Prostate gland (tissue), 2 donors: ENCODE measurements at regions of chr5 and their contacts with region 1.

Region 1: GRCh38 chr5:64634997-64635686 is 55.2 kb upstream of the SHISAL2B start:
- DNase-seq: no peak
- H3K4me3 ChIP-seq: no peak overlapping the region
- H3K27ac ChIP-seq: no peak overlapping the region
- H3K4me1 ChIP-seq: no peaks in the 10 kb centered on the region
- H3K27me3 ChIP-seq: no peaks in the 10 kb centered on the region
- CTCF ChIP-seq: peak; percentile 73 to 86 (median 78)
- POLR2A ChIP-seq: no peak

Region 2: GRCh38 chr5:64784451-64785025 is 149.4 kb after region 1 on chr5:
- intact Hi-C with region 1: loop called (anchors 2 kb)
- DNase-seq: peak; percentile 77
- H3K4me3 ChIP-seq: no peak overlapping the region
- H3K27ac ChIP-seq: no peak overlapping the region
- H3K4me1 ChIP-seq: no peaks in the 10 kb centered on the region
- H3K27me3 ChIP-seq: no peaks in the 10 kb centered on the region
- CTCF ChIP-seq: peak; percentile 67 to 81 (median 78)
- POLR2A ChIP-seq: no peak

Region 3: GRCh38 chr5:64958757-64959391 is 323.7 kb after region 1 on chr5:
- intact Hi-C with region 1: loop called (anchors 10 kb)
- DNase-seq: no peak
- H3K4me3 ChIP-seq: no peak overlapping the region
- H3K27ac ChIP-seq: no peak overlapping the region
- H3K4me1 ChIP-seq: no peaks in the 10 kb centered on the region
- H3K27me3 ChIP-seq: no peaks in the 10 kb centered on the region
- CTCF ChIP-seq: peak in 2 of 4 experiments; percentile 45 to 48
- POLR2A ChIP-seq: no peak

Region 4: DNA sequence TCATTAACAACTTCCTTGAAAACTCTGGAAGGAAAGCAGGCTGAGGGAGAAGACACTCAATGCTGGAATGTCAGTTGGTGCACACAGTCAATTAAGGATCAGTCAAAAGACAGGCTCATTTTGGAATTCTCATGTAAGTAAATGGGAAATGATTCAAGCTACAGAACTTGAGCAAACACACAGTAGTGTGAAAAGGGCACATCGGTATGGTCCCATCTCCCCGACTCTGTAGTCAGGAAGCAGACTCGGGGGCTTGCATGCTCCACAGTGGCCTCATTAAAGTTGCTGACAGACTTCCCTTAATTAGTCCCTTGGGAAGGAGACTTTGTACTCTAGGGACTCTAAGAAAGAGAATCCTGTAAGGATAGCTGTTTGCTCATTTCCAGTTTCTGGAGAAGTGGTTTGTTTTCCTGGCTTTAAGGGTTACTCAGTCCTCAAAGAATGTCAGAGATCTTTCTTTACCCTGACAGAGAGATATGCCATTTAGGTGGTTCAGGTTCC is 507.4 kb after region 1 on chr5:
- intact Hi-C with region 1: no loop called
- DNase-seq: no peak
- H3K4me3 ChIP-seq: no peak overlapping the region
- H3K27ac ChIP-seq: no peak overlapping the region
- H3K4me1 ChIP-seq: no peaks in the 10 kb centered on the region
- H3K27me3 ChIP-seq: no peaks in the 10 kb centered on the region
- CTCF ChIP-seq: no peak
- POLR2A ChIP-seq: no peak